ENCODE measurements at regions of chr17 and their contacts with region 1.

Region 1: DNA sequence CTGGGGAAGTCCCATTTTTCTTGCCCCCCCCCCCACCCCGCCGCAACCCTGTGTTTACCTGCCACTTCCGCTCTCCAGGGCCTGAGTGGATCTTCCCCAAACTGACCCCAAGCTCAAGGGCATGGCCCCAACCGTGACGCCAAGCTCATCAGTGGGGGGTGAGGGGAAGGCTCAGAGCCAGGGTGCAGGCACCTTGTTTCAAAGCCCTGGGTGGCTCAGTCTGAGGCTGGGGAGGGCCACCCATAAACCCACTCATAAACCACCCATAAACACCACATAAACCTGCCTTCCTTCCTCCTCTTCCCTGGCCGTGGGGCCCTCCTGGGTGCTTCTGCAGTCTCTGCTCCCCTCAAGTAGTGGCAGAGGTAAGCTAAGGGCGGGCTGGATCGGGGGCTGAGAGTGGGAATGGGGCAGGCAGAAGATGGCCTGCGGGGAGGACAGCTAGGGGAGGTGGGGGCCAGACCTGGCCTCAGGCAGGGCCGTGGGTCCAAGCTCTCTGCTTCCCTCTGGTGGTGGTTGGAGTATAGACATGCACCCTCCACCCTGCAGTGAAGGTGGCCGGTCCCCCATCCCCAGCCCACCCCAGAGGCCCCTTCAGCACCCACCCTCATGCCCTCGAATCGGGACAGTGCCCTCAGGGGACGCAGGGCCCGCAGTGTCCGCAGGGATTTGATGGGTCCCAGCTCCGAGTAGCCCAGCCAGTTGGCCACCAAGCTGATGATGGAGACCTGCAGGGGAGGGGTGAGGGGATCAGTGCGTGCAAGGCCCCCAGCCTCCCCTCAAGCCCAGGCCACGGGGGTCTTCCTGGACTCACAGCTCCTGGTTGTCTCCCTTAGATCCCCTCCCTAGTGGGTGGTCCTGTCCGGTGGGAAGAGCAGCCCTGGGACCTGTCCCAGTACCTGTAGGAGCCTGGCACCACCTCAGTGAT is 14.6 kb upstream of the CD79B start:
- DNase-seq: peak; percentile 73
- ATAC-seq: peak; percentile 80
- H3K4me3 Mint-ChIP-seq: no peak overlapping the region
- H3K27ac Mint-ChIP-seq: no peak overlapping the region
- H3K4me1 Mint-ChIP-seq: peaks cover 6% of the 10 kb centered on the region; the same call in 1 of the 2 replicates
- H3K27me3 Mint-ChIP-seq: no peaks in the 10 kb centered on the region
- CTCF ChIP-seq: peak; percentile 82

Region 2: DNA sequence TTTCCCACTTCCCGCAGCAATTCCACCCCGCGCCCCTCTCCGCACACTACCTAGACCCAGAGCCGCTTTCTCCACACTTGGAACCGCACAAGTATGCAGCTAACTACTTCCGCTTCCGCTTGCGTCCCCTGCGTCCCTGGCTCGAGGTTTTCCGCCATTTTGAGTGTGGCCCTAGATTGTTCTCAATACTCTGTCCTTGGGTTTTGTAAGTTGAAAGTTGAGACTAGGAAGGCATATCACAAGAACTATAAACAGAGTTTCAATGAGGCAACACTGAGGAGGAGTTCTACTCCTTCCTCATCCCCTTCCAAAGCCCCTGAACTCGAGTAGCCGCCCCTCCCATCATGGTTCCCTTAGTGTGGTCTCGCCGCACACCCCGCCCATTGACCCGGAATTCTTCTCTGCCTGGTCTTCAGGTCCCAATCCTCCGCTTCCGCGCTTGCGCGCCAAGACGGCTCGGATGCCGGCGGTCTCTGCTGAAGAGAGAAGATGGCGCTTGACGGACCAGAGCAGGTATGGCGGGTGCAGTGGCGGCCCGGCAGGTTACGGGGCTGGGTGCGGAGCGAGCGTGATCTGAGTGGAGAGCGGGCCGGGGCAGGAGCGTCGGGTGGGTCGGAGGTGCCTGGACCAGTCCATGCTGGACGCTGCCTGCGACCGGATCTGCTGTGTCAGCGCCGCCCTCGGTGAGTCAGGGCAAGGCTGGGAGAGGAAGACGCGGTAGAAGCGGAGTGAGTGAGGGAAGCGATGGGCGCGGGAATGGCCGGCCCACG is 119.5 kb before region 1 on chr17 and contains the starts of genes FTSJ3 and PSMC5:
- CTCF ChIA-PET with region 1: no interaction called
- POLR2A ChIA-PET with region 1: no interaction called
- DNase-seq: peak; percentile 92
- ATAC-seq: peak; percentile 92
- H3K4me3 Mint-ChIP-seq: peak within 1 kb of the TSS; percentile 96
- H3K27ac Mint-ChIP-seq: peak within 1 kb of the TSS; percentile 100
- H3K4me1 Mint-ChIP-seq: peaks cover 18% of the 10 kb centered on the region
- H3K27me3 Mint-ChIP-seq: no peaks in the 10 kb centered on the region
- CTCF ChIP-seq: no peak
- total RNA-seq, gene FTSJ3: 47.7 to 62.1 TPM (median 52.0 TPM) in 3 replicates
- total RNA-seq, gene PSMC5: 135 to 152 TPM (median 149 TPM) in 3 replicates

Region 3: GRCh38 chr17:63904316-63904715 is 42.4 kb before region 1 on chr17:
- CTCF ChIA-PET with region 1: interaction called, 13 read pairs
- POLR2A ChIA-PET with region 1: no interaction called
- DNase-seq: no peak
- ATAC-seq: no peak
- H3K4me3 Mint-ChIP-seq: no peak overlapping the region
- H3K27ac Mint-ChIP-seq: no peak overlapping the region
- H3K4me1 Mint-ChIP-seq: peaks cover 18% of the 10 kb centered on the region
- H3K27me3 Mint-ChIP-seq: peaks cover 6% of the 10 kb centered on the region; the same call in 1 of the 2 replicates
- CTCF ChIP-seq: no peak

Region 4: DNA sequence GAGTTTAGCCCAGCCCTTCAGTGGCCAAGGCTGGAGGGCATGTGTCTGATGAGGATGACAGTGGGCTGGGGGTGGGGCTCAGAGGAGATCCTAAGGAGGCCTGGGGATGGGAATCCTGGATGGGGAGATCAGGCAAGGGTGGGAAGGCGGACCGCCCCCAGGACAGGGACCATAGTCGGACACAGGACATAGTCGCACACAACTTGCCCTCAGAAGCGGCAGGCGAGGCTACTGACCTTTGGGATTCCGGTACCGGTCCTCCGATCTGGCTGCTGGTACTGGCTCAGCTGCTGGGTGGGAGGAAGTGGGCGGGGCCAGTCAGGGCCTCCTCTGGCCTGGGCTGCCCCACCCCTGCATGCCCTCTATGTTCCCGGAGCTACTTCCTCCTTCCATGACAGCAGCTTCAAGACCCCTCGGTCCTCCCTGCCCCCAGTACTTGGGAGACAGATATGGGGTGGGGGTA is 15.6 kb before region 1 on chr17:
- CTCF ChIA-PET with region 1: interaction called, 42 read pairs
- POLR2A ChIA-PET with region 1: interaction called, 3 read pairs
- DNase-seq: peak; percentile 58
- ATAC-seq: peak; percentile 86
- H3K4me3 Mint-ChIP-seq: no peak overlapping the region
- H3K27ac Mint-ChIP-seq: no peak overlapping the region
- H3K4me1 Mint-ChIP-seq: peaks cover 18% of the 10 kb centered on the region
- H3K27me3 Mint-ChIP-seq: no peaks in the 10 kb centered on the region; the same call in 1 of the 2 replicates
- CTCF ChIP-seq: no peak

Region 5: DNA sequence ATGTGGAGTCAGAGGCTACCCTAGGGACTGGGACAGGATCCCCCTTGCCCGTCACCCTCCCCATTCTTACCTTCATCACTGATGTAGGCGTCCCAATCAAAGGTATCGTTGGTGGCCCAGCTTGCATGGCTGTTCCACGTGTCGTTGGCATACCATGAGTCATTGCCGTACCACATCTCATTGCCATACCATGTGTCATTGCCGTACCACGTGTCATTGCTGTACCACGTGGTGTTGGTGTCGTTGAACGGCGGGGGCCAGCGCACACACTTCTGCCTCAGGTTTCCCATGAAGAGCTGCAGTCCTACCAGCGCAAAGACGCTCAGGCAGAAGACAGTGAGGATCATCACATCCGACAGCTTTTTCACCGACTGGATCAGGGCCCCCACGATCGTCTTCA is 21.2 kb after region 1 on chr17:
- CTCF ChIA-PET with region 1: interaction called, 11 read pairs
- POLR2A ChIA-PET with region 1: no interaction called
- DNase-seq: no peak
- ATAC-seq: no peak
- H3K4me3 Mint-ChIP-seq: no peak overlapping the region
- H3K27ac Mint-ChIP-seq: no peak overlapping the region
- H3K4me1 Mint-ChIP-seq: no peaks in the 10 kb centered on the region
- H3K27me3 Mint-ChIP-seq: no peaks in the 10 kb centered on the region; the same call in 1 of the 2 replicates
- CTCF ChIP-seq: no peak

Region 6: GRCh38 chr17:63984651-63985386 is 38.1 kb after region 1 on chr17:
- CTCF ChIA-PET with region 1: interaction called, 28 read pairs
- POLR2A ChIA-PET with region 1: no interaction called
- DNase-seq: no peak
- ATAC-seq: no peak
- H3K4me3 Mint-ChIP-seq: no peak overlapping the region
- H3K27ac Mint-ChIP-seq: no peak overlapping the region
- H3K4me1 Mint-ChIP-seq: peaks cover 15% of the 10 kb centered on the region
- H3K27me3 Mint-ChIP-seq: peaks cover 4% of the 10 kb centered on the region; the same call in 1 of the 2 replicates
- CTCF ChIP-seq: no peak